ENCODE measurements at regions of chr11 and their contacts with region 1.

Region 1: GRCh38 chr11:59000003-59000402 is 60.7 kb downstream of the GLYATL1 start:
- DNase-seq: no peak
- H3K4me3 ChIP-seq: no peak overlapping the region
- CTCF ChIP-seq: no peak
- POLR2A ChIP-seq: no peak

Region 2: DNA sequence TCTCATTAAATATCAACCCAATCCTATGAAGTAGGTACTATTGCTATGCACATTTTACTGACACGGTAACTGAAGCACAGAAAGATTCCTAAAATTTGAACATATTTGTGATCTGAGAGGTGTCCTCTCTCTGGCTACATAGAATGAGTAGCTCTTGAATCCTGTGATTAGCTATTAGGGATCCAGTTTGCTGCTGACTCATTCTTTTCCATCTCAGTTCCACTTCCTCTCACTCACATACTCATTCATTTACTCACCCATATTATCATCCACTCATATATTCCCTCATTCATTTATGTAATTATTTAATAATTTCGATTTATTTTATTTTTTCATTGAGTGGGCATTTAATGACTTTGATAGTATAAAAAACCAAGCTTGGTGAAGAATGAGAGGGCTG is 683.9 kb before region 1 on chr11:
- intact Hi-C with region 1: loop called (anchors 5 kb)
- DNase-seq: no peak
- H3K4me3 ChIP-seq: no peak overlapping the region
- CTCF ChIP-seq: no peak
- POLR2A ChIP-seq: no peak

Region 3: GRCh38 chr11:59429924-59430516 is 430.0 kb after region 1 on chr11:
- intact Hi-C with region 1: no loop called
- DNase-seq: peak in 1 of 2 donors; percentile 23
- H3K4me3 ChIP-seq: no peak overlapping the region
- CTCF ChIP-seq: no peak
- POLR2A ChIP-seq: no peak

Measured in lower leg skin (tissue), 4 donors.